ENCODE measurements at regions of chr6 and their contacts with region 1.

Region 1: DNA sequence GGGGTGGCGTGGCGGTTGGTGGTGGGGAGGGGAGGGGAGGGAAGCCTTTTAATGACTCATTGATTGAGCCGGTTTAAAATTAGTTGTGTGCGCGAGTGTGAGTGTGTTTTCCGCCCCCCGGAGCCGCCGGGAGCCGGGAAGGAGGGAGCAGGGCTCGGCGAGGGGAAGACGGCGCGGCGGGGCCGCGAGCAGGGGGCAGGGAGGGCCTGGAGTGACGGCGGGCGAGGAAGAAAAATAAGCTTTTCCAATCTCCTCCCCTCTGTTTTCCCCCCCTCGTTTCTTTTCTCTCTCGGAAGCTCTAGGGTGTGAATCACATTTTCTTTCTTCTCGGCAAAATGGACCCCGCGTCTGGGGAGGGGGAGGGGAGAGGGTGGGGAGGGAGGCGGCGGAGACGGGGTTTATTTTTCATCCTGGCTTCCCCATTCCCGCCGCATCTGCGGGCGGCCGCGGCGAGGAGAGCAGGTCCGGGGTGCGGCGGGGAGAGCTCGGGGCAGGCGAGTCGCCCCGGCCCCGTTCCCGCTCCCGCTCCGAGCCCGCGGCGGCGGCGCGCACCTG is 847 bp downstream of the BICRAL start:
- DNase-seq: no peak
- ATAC-seq: peak; percentile 78
- H3K4me3 ChIP-seq: peak overlapping the region; percentile 59 to 65
- H3K27ac ChIP-seq: peak overlapping the region; percentile 97
- H3K4me1 ChIP-seq: peaks cover 23% of the 10 kb centered on the region
- H3K27me3 ChIP-seq: no peaks in the 10 kb centered on the region
- CTCF ChIP-seq: no peak

Region 2: DNA sequence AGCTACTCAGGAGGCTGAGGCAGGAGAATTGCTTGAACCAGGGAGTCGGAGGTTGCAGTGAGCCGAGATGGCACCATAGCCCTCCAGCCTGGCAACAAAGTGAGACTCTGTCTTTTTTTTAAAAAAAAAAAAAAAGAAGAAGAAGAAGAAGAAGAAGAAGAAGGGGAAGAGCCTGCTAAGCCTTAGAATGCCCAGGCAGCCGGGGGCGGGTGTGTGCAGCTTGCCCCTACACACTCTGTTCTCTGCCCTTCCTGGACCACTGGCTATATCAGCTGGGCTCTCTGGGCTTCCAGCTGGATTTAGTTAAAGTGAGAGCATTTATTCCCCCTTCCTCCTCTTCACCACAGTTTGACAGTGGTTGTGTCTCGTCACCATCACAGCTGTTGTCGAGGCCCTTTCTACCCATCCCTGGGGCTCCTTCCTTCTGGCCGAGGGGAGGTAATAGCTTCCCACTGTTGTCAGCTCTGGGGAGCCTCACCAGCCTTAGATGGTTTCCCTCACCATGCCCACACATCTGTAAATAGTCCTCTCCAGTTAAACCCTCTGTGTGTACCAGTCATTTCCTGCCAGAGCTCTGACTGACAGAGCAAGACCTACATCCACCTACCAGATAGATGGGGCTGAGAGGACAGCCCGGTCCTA is 408.6 kb before region 1 on chr6:
- CTCF ChIA-PET with region 1: no interaction called
- POLR2A ChIA-PET with region 1: no interaction called
- in situ Hi-C with region 1: no loop called
- intact Hi-C with region 1: no loop called
- DNase-seq: no peak
- ATAC-seq: no peak
- H3K4me3 ChIP-seq: no peak overlapping the region
- H3K27ac ChIP-seq: no peak overlapping the region
- H3K4me1 ChIP-seq: peaks cover 9% of the 10 kb centered on the region
- H3K27me3 ChIP-seq: no peaks in the 10 kb centered on the region
- CTCF ChIP-seq: no peak

Region 3: GRCh38 chr6:42547407-42548329 is 235.0 kb before region 1 on chr6:
- CTCF ChIA-PET with region 1: interaction called, 15 read pairs
- POLR2A ChIA-PET with region 1: no interaction called
- in situ Hi-C with region 1: no loop called
- intact Hi-C with region 1: no loop called
- DNase-seq: peak; percentile 70
- ATAC-seq: peak; percentile 99
- H3K4me3 ChIP-seq: peak overlapping the region; percentile 47 to 71
- H3K27ac ChIP-seq: peak overlapping the region; percentile 75
- H3K4me1 ChIP-seq: peaks cover 13% of the 10 kb centered on the region
- H3K27me3 ChIP-seq: no peaks in the 10 kb centered on the region
- CTCF ChIP-seq: peak; percentile 99

Region 4: DNA sequence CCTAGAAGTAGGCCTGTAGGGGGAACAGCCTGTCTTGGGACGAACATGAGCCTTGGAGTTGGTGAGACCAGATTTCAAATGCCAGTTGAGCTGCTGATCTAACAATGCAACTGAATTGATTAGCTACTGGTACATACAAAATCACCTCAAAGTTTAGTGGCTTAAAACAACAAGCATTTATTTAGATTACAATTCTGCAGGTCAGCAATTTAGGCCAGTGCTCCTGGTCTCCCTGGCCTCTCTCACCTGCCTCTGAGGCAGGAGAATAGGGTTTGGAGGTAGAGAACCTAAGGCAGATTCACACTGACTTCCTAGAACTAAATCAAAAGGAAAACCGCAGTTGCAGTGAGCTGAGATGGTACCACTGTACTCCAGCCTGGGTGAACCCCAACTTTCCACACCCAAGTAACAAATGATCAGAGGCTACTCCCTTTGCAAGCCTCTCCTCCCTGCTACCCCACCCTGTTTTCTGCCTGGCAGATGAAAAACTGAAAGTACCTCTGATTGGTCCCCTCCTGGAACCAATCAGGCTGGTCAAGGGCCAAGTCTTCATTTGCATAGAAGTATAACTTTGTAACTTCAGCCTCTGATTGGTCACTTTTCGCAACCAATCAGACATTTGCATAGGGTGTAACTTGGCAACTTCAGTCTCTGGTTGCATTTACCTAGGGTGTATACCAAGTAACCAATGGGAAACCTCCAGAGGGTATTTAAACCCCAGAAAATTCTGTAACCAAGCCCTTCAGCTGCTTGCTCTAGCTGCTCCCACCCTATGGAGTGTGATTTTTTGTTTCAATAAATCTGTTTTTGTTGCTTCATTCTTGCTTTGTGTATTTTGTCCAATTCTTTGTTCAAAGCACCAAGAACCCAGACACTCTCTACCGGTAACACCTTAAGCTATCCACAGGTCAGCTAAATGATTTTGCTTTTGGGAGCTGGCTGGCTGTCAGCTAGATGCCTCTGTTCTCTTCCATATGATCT is 226.9 kb before region 1 on chr6:
- CTCF ChIA-PET with region 1: interaction called, 15 read pairs
- POLR2A ChIA-PET with region 1: interaction called, 11 read pairs
- in situ Hi-C with region 1: no loop called
- intact Hi-C with region 1: no loop called
- DNase-seq: no peak
- ATAC-seq: no peak
- H3K4me3 ChIP-seq: no peak overlapping the region
- H3K27ac ChIP-seq: no peak overlapping the region
- H3K4me1 ChIP-seq: 0 out of 2 replicates have a peak, but pooled peaks cover 3% of the 10 kb centered on the region
- H3K27me3 ChIP-seq: no peaks in the 10 kb centered on the region
- CTCF ChIP-seq: no peak

Region 5: GRCh38 chr6:42762426-42762859 is 20.3 kb before region 1 on chr6:
- CTCF ChIA-PET with region 1: no interaction called
- POLR2A ChIA-PET with region 1: interaction called, 19 read pairs
- in situ Hi-C with region 1: no loop called
- intact Hi-C with region 1: no loop called
- DNase-seq: no peak
- ATAC-seq: no peak
- H3K4me3 ChIP-seq: no peak overlapping the region
- H3K27ac ChIP-seq: no peak overlapping the region
- H3K4me1 ChIP-seq: peaks cover 13% of the 10 kb centered on the region
- H3K27me3 ChIP-seq: no peaks in the 10 kb centered on the region
- CTCF ChIP-seq: no peak